Psoas muscle (tissue), 8 donors: ENCODE measurements at regions of chr2 and their contacts with region 1.

Region 1: GRCh38 chr2:121408641-121409040 is 122.0 kb upstream of the RNU4ATAC start:
- DNase-seq: no peak
- ATAC-seq: no peak
- H3K4me3 ChIP-seq: no peak overlapping the region
- H3K27ac ChIP-seq: no peak overlapping the region
- H3K4me1 ChIP-seq: no peaks in the 10 kb centered on the region
- H3K27me3 ChIP-seq: no peaks in the 10 kb centered on the region
- CTCF ChIP-seq: no peak

Region 2: DNA sequence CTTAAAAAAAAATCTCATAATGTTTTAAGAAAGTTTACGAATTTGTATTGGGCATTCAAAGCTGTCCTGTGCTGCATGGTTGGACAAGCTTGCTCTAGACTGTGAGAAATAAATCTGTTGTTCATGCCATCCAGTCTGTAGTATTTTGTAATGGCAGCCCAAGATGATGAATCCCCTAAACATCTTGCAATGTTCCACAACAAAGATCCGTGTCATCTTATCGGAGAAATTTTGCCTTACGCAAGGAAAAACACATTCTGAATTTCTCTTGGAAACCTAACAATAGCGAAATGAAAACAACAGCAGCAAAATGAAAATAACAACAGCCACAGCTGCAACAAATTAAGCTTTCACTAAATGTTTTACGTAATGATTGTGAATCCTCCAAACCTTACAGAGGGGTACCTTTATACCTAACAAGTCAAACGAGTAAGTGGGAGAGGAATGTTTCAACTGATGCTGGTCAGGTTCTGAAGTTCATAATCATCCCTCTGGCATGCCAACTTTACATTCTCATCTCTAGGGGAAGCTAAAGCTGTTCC is 46.0 kb after region 1 on chr2:
- intact Hi-C with region 1: loop called in 1 of 2 experiments (anchors 5 kb)
- DNase-seq: no peak
- ATAC-seq: no peak
- H3K4me3 ChIP-seq: no peak overlapping the region
- H3K27ac ChIP-seq: no peak overlapping the region
- H3K4me1 ChIP-seq: no peaks in the 10 kb centered on the region
- H3K27me3 ChIP-seq: no peaks in the 10 kb centered on the region
- CTCF ChIP-seq: no peak

Region 3: DNA sequence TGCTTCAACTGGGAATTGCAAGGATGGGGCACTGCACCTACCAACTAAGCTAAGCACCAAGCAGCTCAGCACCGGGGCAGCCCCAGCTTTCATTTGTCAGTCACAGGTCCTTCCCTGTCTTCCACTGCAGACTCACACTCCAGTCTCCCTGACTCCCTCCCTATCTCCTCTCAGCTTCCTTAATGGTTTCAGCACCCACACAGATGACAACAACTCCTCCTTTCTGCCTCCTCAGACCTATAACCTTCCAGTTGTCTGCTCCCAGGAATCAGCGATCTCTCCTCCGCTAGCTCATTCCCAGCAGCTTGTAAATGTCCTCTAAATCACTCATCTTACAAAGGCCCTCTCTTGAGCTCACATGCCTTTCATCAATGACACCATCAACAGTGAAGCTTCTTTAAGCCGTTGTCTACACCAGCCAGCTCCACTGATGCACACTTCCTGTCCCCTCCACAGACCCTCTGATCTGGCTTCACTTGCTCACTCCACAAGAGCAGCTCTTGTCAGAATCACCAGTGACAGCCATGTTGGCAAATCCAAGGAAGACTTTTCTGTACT is 208.5 kb after region 1 on chr2:
- intact Hi-C with region 1: no loop called
- DNase-seq: no peak
- ATAC-seq: peak in 2 of 4 donors; percentile 6 to 48
- H3K4me3 ChIP-seq: no peak overlapping the region
- H3K27ac ChIP-seq: peak overlapping the region; percentile 39
- H3K4me1 ChIP-seq: peaks cover 46% of the 10 kb centered on the region
- H3K27me3 ChIP-seq: no peaks in the 10 kb centered on the region
- CTCF ChIP-seq: no peak